Aorta (tissue), 5 donors: ENCODE measurements at regions of chr22 and their contacts with region 1.

Region 1: GRCh38 chr22:36065775-36066559 is 37.3 kb upstream of the RBFOX2 start:
- DNase-seq: peak; percentile 96 to 97
- ATAC-seq: peak; percentile 97
- H3K4me3 ChIP-seq: peak overlapping the region; percentile 3 to 15
- H3K27ac ChIP-seq: peak overlapping the region; percentile 6 to 37
- H3K4me1 ChIP-seq: no peaks in the 10 kb centered on the region
- H3K27me3 ChIP-seq: no peaks in the 10 kb centered on the region

Region 2: DNA sequence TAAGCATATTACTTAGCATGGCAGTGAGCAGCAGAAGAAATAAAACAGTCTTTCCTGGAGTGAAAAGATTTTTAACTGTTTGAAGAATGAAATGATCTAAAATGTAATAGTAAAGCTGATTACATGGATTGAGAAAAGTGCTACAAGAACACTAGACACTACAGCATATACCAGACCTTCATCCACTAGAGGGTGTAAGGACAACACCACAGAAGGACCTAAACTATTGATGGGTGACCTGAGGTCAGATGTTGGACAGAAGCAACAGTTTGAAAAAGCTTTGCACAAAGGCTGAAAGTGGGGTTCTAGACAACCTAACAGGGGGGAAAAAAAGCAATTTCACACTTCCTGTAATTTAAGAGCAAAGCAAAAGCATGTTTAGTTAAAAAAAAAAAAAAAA is 135.0 kb before region 1 on chr22:
- intact Hi-C with region 1: loop called (anchors 1 to 5 kb)
- DNase-seq: no peak
- ATAC-seq: peak; percentile 89
- H3K4me3 ChIP-seq: no peak overlapping the region
- H3K27ac ChIP-seq: no peak overlapping the region
- H3K4me1 ChIP-seq: no peaks in the 10 kb centered on the region
- H3K27me3 ChIP-seq: no peaks in the 10 kb centered on the region

Region 3: DNA sequence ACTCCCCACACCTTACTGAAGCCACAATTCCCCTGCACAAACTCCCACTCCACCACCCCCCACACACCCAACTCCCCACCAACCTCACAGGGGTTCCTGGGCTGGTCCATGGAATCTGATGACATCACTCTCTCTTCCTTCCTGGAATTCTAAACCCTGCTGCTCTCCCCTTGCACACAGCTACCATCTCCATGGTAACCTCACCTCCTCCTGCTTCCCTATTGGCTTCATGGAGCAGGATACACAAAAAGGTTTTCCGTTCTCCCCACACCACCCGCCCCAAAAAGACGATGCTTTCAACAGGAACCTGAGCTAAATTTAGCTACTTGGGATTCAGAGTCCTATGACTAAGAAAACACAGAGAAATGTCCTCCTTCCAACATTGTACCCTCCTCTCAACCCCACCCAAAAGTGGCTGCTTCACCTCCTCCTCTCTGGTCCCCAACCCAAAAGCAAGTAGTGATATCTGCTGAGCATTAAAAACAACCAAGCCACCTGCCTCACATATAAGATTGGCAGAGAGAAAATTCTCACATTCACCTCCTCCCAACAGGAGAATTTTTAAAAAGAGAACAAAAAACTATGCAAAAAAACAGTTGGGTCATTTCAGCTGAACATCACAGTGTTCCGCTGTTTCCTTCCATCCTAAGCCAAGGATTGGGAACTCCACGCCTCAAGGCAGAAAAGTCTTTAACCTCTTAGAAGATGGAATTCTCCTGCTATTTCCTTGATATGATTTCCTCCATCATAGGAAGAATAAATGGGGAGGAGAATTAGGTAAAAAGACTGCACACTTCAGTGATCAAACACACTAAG is 104.3 kb before region 1 on chr22:
- intact Hi-C with region 1: no loop called
- DNase-seq: peak; percentile 62 to 79
- ATAC-seq: peak; percentile 92
- H3K4me3 ChIP-seq: peak overlapping the region in 1 of 2 donors; percentile 8
- H3K27ac ChIP-seq: peak overlapping the region in 1 of 2 donors; percentile 59
- H3K4me1 ChIP-seq: peaks cover 2 to 8% of the 10 kb centered on the region in 2 donors
- H3K27me3 ChIP-seq: no peaks in the 10 kb centered on the region

Region 4: GRCh38 chr22:36028646-36029405 is 37.1 kb before region 1 on chr22 and contains the start of gene RBFOX2:
- intact Hi-C with region 1: loop called (anchors 5 kb)
- DNase-seq: peak; percentile 97 to 99
- ATAC-seq: peak; percentile 98
- H3K4me3 ChIP-seq: peak within 1 kb of the TSS; percentile 85 to 89
- H3K27ac ChIP-seq: peak within 1 kb of the TSS; percentile 71 to 90
- H3K4me1 ChIP-seq: peaks cover 0 to 2% of the 10 kb centered on the region in 2 donors
- H3K27me3 ChIP-seq: no peaks in the 10 kb centered on the region
- total RNA-seq, gene RBFOX2: 117 to 152 TPM

Region 5: GRCh38 chr22:36113121-36113520 is 47.2 kb after region 1 on chr22:
- intact Hi-C with region 1: no loop called
- DNase-seq: peak in 1 of 2 donors; percentile 55
- ATAC-seq: no peak
- H3K4me3 ChIP-seq: no peak overlapping the region
- H3K27ac ChIP-seq: no peak overlapping the region
- H3K4me1 ChIP-seq: no peaks in the 10 kb centered on the region
- H3K27me3 ChIP-seq: no peaks in the 10 kb centered on the region

Region 6: DNA sequence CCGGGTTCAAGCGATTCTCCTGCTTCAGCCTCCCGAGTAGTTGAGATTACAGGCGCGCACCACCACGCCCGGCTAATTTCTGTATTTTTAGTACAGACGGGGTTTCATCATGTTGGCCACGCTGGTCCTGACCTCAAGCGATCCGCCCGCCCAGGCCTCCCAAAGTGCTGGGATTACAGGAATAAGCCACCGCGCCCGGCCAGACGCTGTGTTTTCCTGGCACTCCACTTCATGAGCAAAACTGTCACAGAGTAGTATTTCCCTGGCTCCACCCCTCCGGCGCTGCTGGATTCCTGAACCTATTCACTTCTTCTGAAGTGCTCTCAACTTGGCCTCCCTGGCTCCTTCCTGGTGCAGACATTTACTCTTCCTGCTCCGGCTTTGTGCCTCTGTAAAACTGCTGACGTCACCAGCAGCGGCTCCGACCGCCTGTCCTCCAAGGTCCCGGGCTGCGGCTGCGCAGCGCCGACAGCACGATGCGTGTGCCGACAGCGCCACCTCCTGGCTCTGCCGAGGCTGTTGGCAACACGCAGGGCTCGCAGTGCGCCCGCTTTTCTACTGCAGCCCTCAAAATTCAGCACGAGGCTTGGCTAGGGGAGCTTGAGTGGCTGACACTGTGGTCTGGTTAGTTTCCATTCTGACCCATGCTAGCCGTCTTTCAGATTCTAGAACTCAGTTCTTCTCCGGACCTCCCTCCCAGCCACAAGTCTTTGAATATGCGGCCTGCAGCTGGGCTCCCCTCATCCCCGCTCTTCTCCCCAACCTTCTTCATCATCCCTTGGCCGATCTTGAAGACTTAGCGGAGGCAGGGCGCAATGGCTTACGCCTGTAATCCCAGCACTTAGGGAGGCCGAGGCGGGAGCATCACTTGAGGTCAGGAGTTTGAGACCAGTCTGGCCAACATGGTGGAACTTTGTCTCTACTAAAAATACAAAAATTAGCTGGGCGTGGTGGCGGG is 58.0 kb after region 1 on chr22:
- intact Hi-C with region 1: loop called (anchors 1 to 10 kb)
- DNase-seq: peak; percentile 97 to 98
- ATAC-seq: peak; percentile 98
- H3K4me3 ChIP-seq: no peak overlapping the region
- H3K27ac ChIP-seq: peak overlapping the region in 1 of 2 donors; percentile 73
- H3K4me1 ChIP-seq: no peaks in the 10 kb centered on the region
- H3K27me3 ChIP-seq: no peaks in the 10 kb centered on the region